ENCODE measurements at regions of chr3 and their contacts with region 1.

Region 1: GRCh38 chr3:49929331-49930240 is at the start of gene MON1A:
- DNase-seq: peak; percentile 65 to 94 (median 74)
- ATAC-seq: peak; percentile 97
- H3K4me3 ChIP-seq: peak within 1 kb of the TSS; percentile 92
- H3K4me3 Mint-ChIP-seq: peak within 1 kb of the TSS; percentile 82 to 90 (median 86)
- H3K27ac ChIP-seq: peak within 1 kb of the TSS; percentile 91
- H3K27ac Mint-ChIP-seq: peak within 1 kb of the TSS; percentile 78 to 92 (median 88)
- H3K4me1 ChIP-seq: peaks cover 6 to 13% of the 10 kb centered on the region in 2 donors
- H3K4me1 Mint-ChIP-seq: peaks cover 6 to 36% (median 31%) of the 10 kb centered on the region in 7 donors
- H3K27me3 ChIP-seq: no peaks in the 10 kb centered on the region
- H3K27me3 Mint-ChIP-seq: no peaks in the 10 kb centered on the region
- total RNA-seq, gene MON1A: 4.6 to 12.6 (median 8.6) TPM

Region 2: GRCh38 chr3:49689046-49689907 is 240.3 kb before region 1 on chr3 and contains the starts of genes MST1 and RNF123:
- CTCF ChIA-PET with region 1: no interaction called
- POLR2A ChIA-PET with region 1: no interaction called
- intact Hi-C with region 1: loop called in 1 of 2 experiments (anchors 1 kb)
- DNase-seq: peak; percentile 89 to 96 (median 93)
- ATAC-seq: peak; percentile 91
- H3K4me3 ChIP-seq: peak within 1 kb of the TSS; percentile 97
- H3K4me3 Mint-ChIP-seq: peak within 1 kb of the TSS; percentile 84 to 99 (median 96)
- H3K27ac ChIP-seq: peak within 1 kb of the TSS; percentile 82
- H3K27ac Mint-ChIP-seq: peak within 1 kb of the TSS; percentile 87 to 99 (median 95)
- H3K4me1 ChIP-seq: peaks cover 6 to 13% of the 10 kb centered on the region in 2 donors
- H3K4me1 Mint-ChIP-seq: peaks cover 20 to 54% (median 41%) of the 10 kb centered on the region in 7 donors
- H3K27me3 ChIP-seq: no peaks in the 10 kb centered on the region
- H3K27me3 Mint-ChIP-seq: peaks cover 0 to 5% (median 0%) of the 10 kb centered on the region in 5 donors
- total RNA-seq, gene MST1: 7.9 to 12.8 (median 10.0) TPM
- total RNA-seq, gene RNF123: 34.5 to 77.2 (median 50.7) TPM

Region 3: GRCh38 chr3:49906004-49906743 is 23.4 kb before region 1 on chr3:
- CTCF ChIA-PET with region 1: no interaction called
- POLR2A ChIA-PET with region 1: interaction called, 3 read pairs
- intact Hi-C with region 1: loop called in 1 of 2 experiments (anchors 1 kb)
- DNase-seq: peak; percentile 16 to 60 (median 39)
- ATAC-seq: peak; percentile 53
- H3K4me3 ChIP-seq: no peak overlapping the region
- H3K4me3 Mint-ChIP-seq: peak overlapping the region; percentile 39 to 79 (median 64)
- H3K27ac ChIP-seq: peak overlapping the region; percentile 24
- H3K27ac Mint-ChIP-seq: peak overlapping the region; percentile 63 to 91 (median 87)
- H3K4me1 ChIP-seq: peaks cover 15 to 26% of the 10 kb centered on the region in 2 donors
- H3K4me1 Mint-ChIP-seq: peaks cover 18 to 41% (median 27%) of the 10 kb centered on the region in 7 donors
- H3K27me3 ChIP-seq: no peaks in the 10 kb centered on the region
- H3K27me3 Mint-ChIP-seq: no peaks in the 10 kb centered on the region

Region 4: GRCh38 chr3:50057756-50058155 is 128.2 kb after region 1 on chr3:
- CTCF ChIA-PET with region 1: no interaction called
- POLR2A ChIA-PET with region 1: no interaction called
- intact Hi-C with region 1: no loop called
- DNase-seq: no peak
- ATAC-seq: no peak
- H3K4me3 ChIP-seq: no peak overlapping the region
- H3K4me3 Mint-ChIP-seq: no peak overlapping the region
- H3K27ac ChIP-seq: no peak overlapping the region
- H3K27ac Mint-ChIP-seq: peak overlapping the region in 3 of 9 donors; percentile 4 to 49 (median 38)
- H3K4me1 ChIP-seq: no peaks in the 10 kb centered on the region
- H3K4me1 Mint-ChIP-seq: no peaks in the 10 kb centered on the region
- H3K27me3 ChIP-seq: no peaks in the 10 kb centered on the region
- H3K27me3 Mint-ChIP-seq: no peaks in the 10 kb centered on the region

Region 5: DNA sequence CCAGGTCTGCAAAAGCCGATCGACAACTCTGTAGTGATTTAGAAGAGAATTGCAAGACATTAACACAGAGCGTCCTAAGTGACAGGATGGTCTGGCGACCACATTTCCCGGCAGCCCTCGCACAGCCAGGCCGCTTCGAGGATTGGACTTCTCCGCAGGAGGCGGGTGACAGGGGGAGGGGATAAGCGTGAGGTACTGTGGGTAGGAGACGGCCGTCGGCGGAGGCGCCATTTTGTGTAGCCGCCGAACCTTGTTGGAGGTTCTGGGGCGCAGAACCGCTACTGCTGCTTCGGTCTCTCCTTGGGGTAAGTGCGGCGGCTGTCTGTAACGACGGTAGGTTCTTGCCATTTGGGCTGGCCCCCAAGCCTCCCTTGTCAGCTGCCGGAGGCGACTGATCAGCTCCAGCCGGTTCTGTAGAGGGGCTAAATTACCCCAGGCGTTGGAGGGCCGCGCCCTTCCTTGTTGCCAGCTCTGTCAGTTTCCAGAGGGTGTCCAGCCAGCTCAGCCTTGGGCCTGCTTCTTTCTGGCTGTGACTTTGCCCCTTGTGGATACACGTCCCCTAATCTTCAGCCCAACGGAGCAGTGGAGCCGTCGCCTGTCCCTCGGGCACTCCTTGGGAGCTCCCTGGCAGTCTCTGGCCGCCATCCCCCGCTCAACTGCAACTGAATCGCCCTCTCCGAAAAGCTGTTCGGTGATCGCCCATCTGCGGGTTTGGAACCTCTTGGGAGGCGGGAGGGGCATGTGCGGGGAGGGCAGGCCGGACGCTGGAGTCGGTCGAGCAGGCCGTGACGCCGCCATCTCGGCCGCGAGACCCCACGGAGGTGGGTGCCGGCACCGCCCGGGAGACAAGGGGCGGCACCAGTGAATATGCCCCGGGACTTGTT is 159.4 kb after region 1 on chr3 and contains the start of gene RBM5:
- CTCF ChIA-PET with region 1: no interaction called
- POLR2A ChIA-PET with region 1: no interaction called
- intact Hi-C with region 1: loop called in 1 of 2 experiments (anchors 2 kb)
- DNase-seq: peak; percentile 71 to 91 (median 89)
- ATAC-seq: peak; percentile 100
- H3K4me3 ChIP-seq: peak within 1 kb of the TSS; percentile 88
- H3K4me3 Mint-ChIP-seq: peak within 1 kb of the TSS; percentile 94 to 98 (median 96)
- H3K27ac ChIP-seq: peak within 1 kb of the TSS; percentile 98
- H3K27ac Mint-ChIP-seq: peak within 1 kb of the TSS; percentile 94 to 99 (median 97)
- H3K4me1 ChIP-seq: peaks cover 16 to 23% of the 10 kb centered on the region in 2 donors
- H3K4me1 Mint-ChIP-seq: peaks cover 24 to 36% (median 32%) of the 10 kb centered on the region in 7 donors
- H3K27me3 ChIP-seq: no peaks in the 10 kb centered on the region
- H3K27me3 Mint-ChIP-seq: no peaks in the 10 kb centered on the region
- total RNA-seq, gene RBM5: 223 to 420 (median 342) TPM